PC-3 (cell line): ENCODE measurements at regions of chr12 and their contacts with region 1.

Region 1: DNA sequence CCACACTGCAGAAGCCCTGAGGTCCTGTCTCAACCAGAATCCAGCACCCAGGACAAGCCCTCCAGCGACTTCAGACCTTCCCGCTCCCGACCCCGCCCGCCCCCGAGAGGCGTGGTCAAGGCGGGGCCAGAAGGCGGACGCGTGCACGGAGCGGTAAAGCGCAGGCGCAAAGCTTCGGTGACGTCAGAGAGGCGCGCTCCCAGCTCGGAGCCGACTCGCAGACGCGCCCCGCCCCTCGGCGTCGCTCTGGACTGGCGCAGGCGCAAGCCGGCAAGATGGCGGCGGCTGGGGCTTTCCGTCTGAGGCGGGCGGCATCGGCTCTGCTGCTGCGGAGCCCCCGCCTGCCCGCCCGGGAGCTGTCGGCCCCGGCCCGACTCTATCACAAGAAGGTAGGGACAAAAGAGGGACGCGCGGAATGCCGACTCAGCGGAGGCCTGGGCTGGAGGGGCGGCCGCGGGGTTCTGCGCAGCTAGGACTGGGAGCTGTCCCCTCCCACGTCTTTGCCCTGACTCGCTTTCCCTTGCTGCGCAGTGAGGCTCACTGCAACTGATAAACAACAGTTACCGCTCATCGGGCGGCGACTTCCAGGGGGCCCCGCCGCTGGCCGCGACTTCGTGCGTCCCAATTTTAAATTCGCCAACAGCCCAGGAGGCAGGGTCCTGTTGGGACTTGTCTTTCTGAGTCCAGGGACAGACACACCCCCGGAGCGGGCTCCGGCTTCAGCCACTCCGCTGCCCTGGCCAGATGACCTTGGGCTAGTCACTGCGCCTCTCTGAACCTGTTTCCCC is at the start of gene ISCU:
- DNase-seq: peak; percentile 99
- ATAC-seq: peak; percentile 67
- H3K4me3 ChIP-seq: peak within 1 kb of the TSS; percentile 90
- H3K27ac ChIP-seq: peak within 1 kb of the TSS; percentile 74
- H3K4me1 ChIP-seq: peaks cover 38% of the 10 kb centered on the region
- H3K27me3 ChIP-seq: no peaks in the 10 kb centered on the region
- CTCF ChIP-seq: no peak
- total RNA-seq, gene ISCU: 120 and 181 TPM in 2 replicates

Region 2: GRCh38 chr12:108618079-108618952 is 55.8 kb after region 1 on chr12:
- CTCF ChIA-PET with region 1: interaction called, 3 read pairs
- POLR2A ChIA-PET with region 1: no interaction called
- intact Hi-C with region 1: loop called (anchors 1 kb)
- DNase-seq: peak; percentile 91
- ATAC-seq: peak; percentile 98
- H3K4me3 ChIP-seq: no peak overlapping the region
- H3K27ac ChIP-seq: no peak overlapping the region
- H3K4me1 ChIP-seq: peaks cover 11% of the 10 kb centered on the region
- H3K27me3 ChIP-seq: no peaks in the 10 kb centered on the region
- CTCF ChIP-seq: peak; percentile 99

Region 3: GRCh38 chr12:108643941-108644810 is 81.6 kb after region 1 on chr12:
- CTCF ChIA-PET with region 1: interaction called, 3 read pairs
- POLR2A ChIA-PET with region 1: interaction called, 11 read pairs
- intact Hi-C with region 1: no loop called
- DNase-seq: peak; percentile 59
- ATAC-seq: peak; percentile 95
- H3K4me3 ChIP-seq: no peak overlapping the region
- H3K27ac ChIP-seq: no peak overlapping the region
- H3K4me1 ChIP-seq: peaks cover 18% of the 10 kb centered on the region
- H3K27me3 ChIP-seq: no peaks in the 10 kb centered on the region
- CTCF ChIP-seq: no peak

Region 4: GRCh38 chr12:108731105-108731865 is 168.7 kb after region 1 on chr12 and contains the start of gene CORO1C:
- CTCF ChIA-PET with region 1: no interaction called
- POLR2A ChIA-PET with region 1: no interaction called
- intact Hi-C with region 1: loop called (anchors 1 kb)
- DNase-seq: peak; percentile 99
- ATAC-seq: peak; percentile 53
- H3K4me3 ChIP-seq: peak within 1 kb of the TSS; percentile 68
- H3K27ac ChIP-seq: peak within 1 kb of the TSS; percentile 87
- H3K4me1 ChIP-seq: peaks cover 57% of the 10 kb centered on the region
- H3K27me3 ChIP-seq: no peaks in the 10 kb centered on the region
- CTCF ChIP-seq: peak; percentile 83
- total RNA-seq, gene CORO1C: 159 and 179 TPM in 2 replicates

Region 5: GRCh38 chr12:108856428-108857157 is 294.1 kb after region 1 on chr12:
- CTCF ChIA-PET with region 1: interaction called, 6 read pairs
- POLR2A ChIA-PET with region 1: interaction called, 3 read pairs
- intact Hi-C with region 1: loop called (anchors 5 kb)
- DNase-seq: peak; percentile 72
- ATAC-seq: peak; percentile 59
- H3K4me3 ChIP-seq: peak overlapping the region; percentile 82
- H3K27ac ChIP-seq: peak overlapping the region; percentile 88
- H3K4me1 ChIP-seq: peaks cover 29% of the 10 kb centered on the region
- H3K27me3 ChIP-seq: no peaks in the 10 kb centered on the region
- CTCF ChIP-seq: no peak